ENCODE measurements at regions of chr5 and their contacts with region 1.

Region 1: DNA sequence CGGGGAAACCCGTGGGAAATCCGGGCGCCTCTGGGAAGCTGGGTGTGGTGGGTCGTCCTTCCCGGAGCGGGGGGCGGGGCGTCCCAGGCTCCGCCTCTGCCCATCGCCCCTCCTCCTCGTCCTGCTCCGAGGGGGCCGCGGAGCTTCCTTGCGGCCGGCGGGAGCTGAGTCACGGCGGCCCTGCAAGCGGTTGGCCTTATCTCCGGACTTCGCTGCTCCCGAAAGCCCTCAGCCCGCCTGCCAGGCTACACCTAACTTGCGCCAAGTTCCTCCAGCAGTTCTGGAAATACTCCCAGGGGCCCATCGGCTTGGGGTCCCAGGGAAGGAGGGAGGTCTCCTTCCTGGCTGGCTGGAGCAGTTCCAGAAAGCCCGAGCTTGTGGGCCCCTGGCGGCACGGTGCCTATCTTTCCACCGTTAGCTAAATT is 54.1 kb upstream of the CDKN2AIPNL start:
- DNase-seq: peak; percentile 86

Region 2: DNA sequence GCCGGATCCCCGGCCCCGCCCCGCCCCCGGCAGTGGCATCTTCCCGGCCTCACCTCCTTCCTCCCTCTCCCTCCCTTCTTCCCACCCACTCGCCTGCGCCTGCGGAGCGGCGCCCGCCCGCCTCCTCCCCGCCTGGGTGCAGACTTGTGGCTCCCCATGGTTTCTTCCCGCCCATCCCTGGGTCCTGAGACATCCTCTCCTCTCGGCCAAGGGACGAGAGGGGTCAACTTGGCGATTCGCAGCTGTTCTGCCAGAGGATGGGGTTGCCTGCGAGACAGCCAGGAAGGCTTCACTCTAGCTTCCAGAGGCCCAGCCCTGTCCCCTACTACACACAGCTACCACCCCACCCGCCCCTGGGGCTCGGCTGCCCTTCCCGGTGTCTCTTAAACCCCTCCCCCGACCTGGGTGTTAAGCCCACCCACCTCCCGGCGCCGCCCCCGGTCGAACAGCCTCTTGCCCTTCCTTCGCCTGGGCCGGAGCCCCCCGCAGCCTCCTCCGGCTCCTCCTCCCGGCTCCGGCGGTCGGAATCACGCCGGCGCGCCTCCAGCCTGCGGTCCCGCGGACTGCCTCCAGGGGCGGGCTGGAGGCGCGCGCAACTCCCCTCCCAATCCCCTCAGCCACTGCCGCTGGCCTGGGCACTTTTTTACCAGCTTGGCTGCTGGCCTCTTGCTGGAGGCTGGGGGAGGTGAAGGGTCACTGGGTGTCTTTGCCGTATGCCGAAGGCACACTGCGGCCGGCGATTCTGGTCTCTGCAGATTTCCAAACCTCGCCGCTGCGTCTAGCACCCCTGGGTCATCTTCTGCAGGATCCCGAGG is 61.5 kb after region 1 on chr5:
- CTCF ChIA-PET with region 1: no interaction called
- POLR2A ChIA-PET with region 1: interaction called, 18 read pairs
- DNase-seq: peak; percentile 80

Measured in HEK293T (cell line).